Activated CD4-positive, alpha-beta T cell treated with anti-CD3 and anti-CD28 coated beads for 36 hours (primary cell): ENCODE measurements at regions of chr4 and their contacts with region 1.

Region 1: DNA sequence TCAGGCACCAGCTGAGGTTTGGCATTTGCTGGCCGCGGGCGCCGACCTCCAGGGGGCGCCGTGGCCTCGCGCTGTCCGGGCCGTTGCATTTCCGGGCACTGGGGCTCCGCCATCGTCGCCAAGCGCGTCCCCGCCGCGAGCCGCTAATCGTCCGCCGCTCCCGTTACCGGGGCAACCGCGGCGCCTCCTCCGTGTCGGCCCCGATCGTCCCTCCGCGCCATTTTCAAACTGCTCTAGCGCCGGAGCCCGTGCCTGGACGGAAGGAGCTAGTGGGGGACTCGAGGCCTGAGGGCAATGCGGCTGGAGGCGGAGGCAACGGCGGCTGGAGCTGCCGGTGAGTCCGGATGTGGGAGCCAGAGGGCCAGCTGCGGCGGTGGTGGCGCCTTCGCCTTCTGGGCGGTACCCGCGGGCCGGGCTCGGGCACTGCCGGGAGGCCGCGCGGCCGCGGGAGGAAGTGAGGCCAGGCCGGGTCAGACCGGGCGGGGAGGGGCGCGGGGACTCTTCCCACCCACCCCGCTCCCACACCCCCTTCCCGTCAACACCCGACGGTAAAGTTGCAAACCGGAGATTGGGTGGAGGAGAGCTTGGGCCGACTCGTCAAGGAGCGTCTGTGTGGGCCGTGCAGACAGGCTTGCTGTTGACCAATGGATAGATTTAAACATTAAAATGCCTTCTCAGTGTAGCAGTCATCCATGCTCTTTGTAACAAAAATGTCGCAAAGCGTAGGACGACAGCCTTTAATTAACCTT is at the start of gene CEP135:
- DNase-seq: peak; percentile 96
- ATAC-seq: peak; percentile 81
- H3K4me3 Mint-ChIP-seq: peak within 1 kb of the TSS; percentile 79
- H3K27ac Mint-ChIP-seq: peak within 1 kb of the TSS; percentile 94
- H3K4me1 Mint-ChIP-seq: peaks cover 37% of the 10 kb centered on the region
- H3K27me3 Mint-ChIP-seq: no peaks in the 10 kb centered on the region
- total RNA-seq, gene CEP135: 17.0 to 17.5 TPM

Region 2: DNA sequence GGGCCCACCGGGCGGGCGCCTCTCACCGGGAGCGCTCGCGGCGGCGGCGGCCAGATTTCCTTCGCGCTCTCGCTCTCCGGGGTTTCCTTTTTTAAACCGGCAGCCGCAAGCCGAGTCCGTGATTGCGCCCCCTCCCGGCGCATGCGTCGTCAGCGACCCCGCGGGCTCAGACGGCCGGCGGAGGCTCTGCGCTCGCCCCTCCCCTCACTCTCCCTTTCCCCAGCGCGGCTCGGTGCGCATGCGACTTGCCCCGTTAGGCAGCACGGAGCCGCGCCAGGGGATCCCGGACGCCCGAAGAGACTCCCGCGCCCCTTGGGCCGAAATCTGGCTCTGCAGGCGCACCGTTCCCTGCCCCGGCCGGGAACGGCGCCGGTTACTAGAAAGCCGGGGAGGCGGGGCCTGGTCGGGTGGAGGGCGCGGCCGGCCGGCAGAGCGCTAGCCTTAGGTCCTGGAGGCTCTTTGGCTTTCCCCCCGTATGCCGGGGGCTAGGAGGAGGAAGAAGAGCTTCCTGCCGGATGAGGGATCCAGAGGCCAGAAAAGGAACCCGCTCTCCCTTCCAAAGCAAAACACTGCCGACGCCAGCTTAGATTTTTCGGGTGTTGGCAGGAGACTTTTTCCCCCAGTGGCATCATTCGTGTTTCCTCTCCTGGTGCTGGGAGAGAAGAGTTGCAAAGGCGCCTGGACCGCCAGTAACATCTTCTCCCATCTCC is 402.0 kb before region 1 on chr4 and contains the start of gene CLOCK:
- CTCF ChIA-PET with region 1: no interaction called
- POLR2A ChIA-PET with region 1: no interaction called
- intact Hi-C with region 1: loop called in 1 of 2 experiments (anchors 1 kb)
- DNase-seq: peak; percentile 90
- ATAC-seq: peak; percentile 77
- H3K4me3 Mint-ChIP-seq: peak within 1 kb of the TSS; percentile 90
- H3K27ac Mint-ChIP-seq: peak within 1 kb of the TSS; percentile 86
- H3K4me1 Mint-ChIP-seq: peaks cover 46% of the 10 kb centered on the region
- H3K27me3 Mint-ChIP-seq: peaks cover 7% of the 10 kb centered on the region
- total RNA-seq, gene CLOCK: 10.4 to 13.3 TPM

Region 3: GRCh38 chr4:55906999-55907398 is 41.9 kb before region 1 on chr4:
- CTCF ChIA-PET with region 1: no interaction called
- POLR2A ChIA-PET with region 1: no interaction called
- intact Hi-C with region 1: loop called (anchors 1 to 2 kb)
- DNase-seq: no peak
- ATAC-seq: peak; percentile 91
- H3K4me3 Mint-ChIP-seq: no peak overlapping the region
- H3K27ac Mint-ChIP-seq: peak overlapping the region; percentile 75
- H3K4me1 Mint-ChIP-seq: peaks cover 24% of the 10 kb centered on the region
- H3K27me3 Mint-ChIP-seq: no peaks in the 10 kb centered on the region

Region 4: DNA sequence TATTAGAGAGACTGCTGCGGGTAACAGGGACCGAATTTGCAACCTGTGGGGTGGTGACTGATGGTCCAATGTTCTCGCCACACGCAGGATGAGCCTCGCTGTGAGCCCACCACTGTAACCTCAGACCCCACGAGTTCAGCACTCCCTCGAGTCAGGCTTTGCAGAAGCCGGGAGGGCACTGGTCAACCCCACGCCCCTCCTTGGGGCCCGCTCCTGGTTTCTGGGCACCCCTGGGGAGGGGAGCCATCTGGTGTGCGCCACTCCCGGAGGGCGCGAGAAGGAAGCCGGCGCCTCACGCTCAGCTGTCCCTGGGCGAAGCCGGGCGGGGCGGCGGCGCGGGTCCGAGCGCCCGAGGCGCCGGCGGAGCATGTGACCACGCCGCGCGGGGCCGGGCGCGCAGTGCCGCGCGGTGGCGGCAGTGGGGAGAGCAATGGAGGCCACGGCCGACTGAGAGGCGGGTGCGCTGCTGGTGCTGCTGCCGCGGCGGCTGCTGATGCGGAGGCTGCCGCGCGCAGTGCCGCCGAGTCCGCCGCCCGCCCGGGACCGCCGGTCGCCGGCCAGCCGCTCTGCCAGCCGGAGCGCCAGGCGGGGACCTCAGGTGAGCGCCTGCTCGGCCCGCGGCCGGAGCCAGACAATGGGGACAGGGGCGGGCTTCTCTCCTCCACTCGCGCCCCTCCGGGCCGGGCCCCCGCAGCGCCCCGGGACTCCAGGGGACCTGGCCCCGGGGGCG is 100.0 kb after region 1 on chr4:
- CTCF ChIA-PET with region 1: interaction called, 9 read pairs
- POLR2A ChIA-PET with region 1: no interaction called
- intact Hi-C with region 1: loop called (anchors 1 kb)
- DNase-seq: peak; percentile 78
- ATAC-seq: peak; percentile 96
- H3K4me3 Mint-ChIP-seq: peak overlapping the region; percentile 65
- H3K27ac Mint-ChIP-seq: no peak overlapping the region
- H3K4me1 Mint-ChIP-seq: peaks cover 13% of the 10 kb centered on the region
- H3K27me3 Mint-ChIP-seq: peaks cover 37% of the 10 kb centered on the region

Region 5: DNA sequence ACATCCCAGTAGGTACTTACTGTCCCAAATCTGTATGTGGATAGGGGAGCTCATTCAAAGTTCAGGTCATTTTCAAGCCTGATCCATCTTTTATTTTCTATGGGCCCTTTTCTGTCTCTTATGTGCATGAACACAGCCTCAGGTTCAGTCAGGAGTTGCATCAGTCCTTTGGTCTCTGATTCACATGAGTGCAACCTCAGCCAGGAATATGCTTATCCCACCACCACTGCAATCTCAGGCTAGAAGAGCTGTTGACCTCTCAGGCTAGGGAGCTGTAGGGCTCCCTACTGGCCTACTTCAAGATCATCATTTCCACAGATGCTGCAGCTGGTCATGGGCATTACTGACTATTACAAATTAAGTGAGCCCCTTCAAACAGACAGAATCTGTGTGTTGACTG is 411.2 kb after region 1 on chr4:
- CTCF ChIA-PET with region 1: no interaction called
- POLR2A ChIA-PET with region 1: no interaction called
- intact Hi-C with region 1: no loop called
- DNase-seq: no peak
- ATAC-seq: no peak
- H3K4me3 Mint-ChIP-seq: no peak overlapping the region
- H3K27ac Mint-ChIP-seq: no peak overlapping the region
- H3K4me1 Mint-ChIP-seq: no peaks in the 10 kb centered on the region
- H3K27me3 Mint-ChIP-seq: no peaks in the 10 kb centered on the region

Region 6: DNA sequence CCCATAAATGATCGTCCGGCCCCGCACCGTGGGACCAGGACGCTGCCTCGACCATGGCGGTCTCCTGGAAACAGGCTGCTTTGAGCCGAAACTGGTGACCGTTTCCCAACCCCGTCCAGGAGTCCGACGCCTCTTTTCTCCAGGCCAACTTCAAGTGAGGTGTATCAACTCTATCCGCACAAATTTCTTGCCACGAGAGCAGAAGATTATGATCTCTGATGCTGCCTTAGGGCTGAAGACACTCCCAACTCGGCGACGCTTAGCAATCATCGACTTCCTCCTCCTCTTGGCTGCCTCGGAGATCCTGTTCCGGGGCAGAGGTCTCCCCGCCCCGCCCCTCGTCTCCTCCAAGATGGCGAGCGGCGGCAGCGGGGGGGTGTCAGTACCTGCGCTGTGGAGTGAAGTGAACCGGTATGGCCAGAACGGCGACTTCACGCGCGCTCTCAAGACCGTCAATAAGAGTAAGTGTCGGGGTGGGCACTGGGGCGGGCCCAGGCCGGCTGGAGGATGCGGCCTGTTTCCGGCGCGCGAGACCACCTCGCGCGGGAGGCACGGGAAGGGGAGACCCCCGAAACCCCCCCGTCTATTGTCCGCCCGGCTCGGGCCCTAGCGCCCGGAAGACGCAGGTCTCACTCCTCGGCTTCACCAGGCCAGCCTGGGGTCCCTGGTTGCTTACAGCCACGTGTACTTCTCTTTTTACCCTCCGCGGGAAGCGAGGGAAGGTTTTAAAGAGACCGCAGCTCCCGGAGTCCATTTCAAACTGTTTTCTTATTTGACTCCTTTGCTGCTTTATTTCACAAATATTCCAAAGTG is 518.6 kb after region 1 on chr4 and contains the start of gene SRP72:
- CTCF ChIA-PET with region 1: no interaction called
- POLR2A ChIA-PET with region 1: no interaction called
- intact Hi-C with region 1: loop called in 1 of 2 experiments (anchors 2 kb)
- DNase-seq: peak; percentile 94
- ATAC-seq: peak; percentile 92
- H3K4me3 Mint-ChIP-seq: peak within 1 kb of the TSS; percentile 100
- H3K27ac Mint-ChIP-seq: peak within 1 kb of the TSS; percentile 99
- H3K4me1 Mint-ChIP-seq: peaks cover 50% of the 10 kb centered on the region
- H3K27me3 Mint-ChIP-seq: no peaks in the 10 kb centered on the region
- total RNA-seq, gene SRP72: 181 to 204 TPM

Region 7: GRCh38 chr4:56977321-56978012 is 1028.6 kb after region 1 on chr4 and contains the start of gene NOA1:
- CTCF ChIA-PET with region 1: no interaction called
- POLR2A ChIA-PET with region 1: no interaction called
- intact Hi-C with region 1: loop called in 1 of 2 experiments (anchors 1 kb)
- DNase-seq: peak; percentile 98
- ATAC-seq: peak; percentile 84
- H3K4me3 Mint-ChIP-seq: peak within 1 kb of the TSS; percentile 88
- H3K27ac Mint-ChIP-seq: peak within 1 kb of the TSS; percentile 97
- H3K4me1 Mint-ChIP-seq: peaks cover 51% of the 10 kb centered on the region
- H3K27me3 Mint-ChIP-seq: no peaks in the 10 kb centered on the region
- total RNA-seq, gene NOA1: 24.9 to 31.5 TPM